ENCODE measurements at regions of chr7 and their contacts with region 1.

Region 1: GRCh38 chr7:54538122-54538521 is 4.1 kb upstream of the VSTM2A start:
- DNase-seq: no peak
- ATAC-seq: no peak
- H3K4me3 ChIP-seq: no peak overlapping the region
- H3K27ac ChIP-seq: no peak overlapping the region
- H3K4me1 ChIP-seq: no peaks in the 10 kb centered on the region
- H3K27me3 ChIP-seq: no peaks in the 10 kb centered on the region
- CTCF ChIP-seq: no peak
- EP300 ChIP-seq: no peak
- POLR2A ChIP-seq: no peak
- RAD21 ChIP-seq: no peak

Region 2: GRCh38 chr7:54477083-54477482 is 61.0 kb before region 1 on chr7:
- CTCF ChIA-PET with region 1: no interaction called
- POLR2A ChIA-PET with region 1: no interaction called
- RAD21 ChIA-PET with region 1: no interaction called
- SMC1A ChIA-PET with region 1: no interaction called
- in situ Hi-C with region 1: no loop called
- intact Hi-C with region 1: loop called (anchors 10 kb)
- DNase-seq: no peak
- ATAC-seq: no peak
- H3K4me3 ChIP-seq: no peak overlapping the region
- H3K27ac ChIP-seq: no peak overlapping the region
- H3K4me1 ChIP-seq: no peaks in the 10 kb centered on the region
- H3K27me3 ChIP-seq: no peaks in the 10 kb centered on the region
- CTCF ChIP-seq: no peak
- EP300 ChIP-seq: no peak
- POLR2A ChIP-seq: no peak
- RAD21 ChIP-seq: no peak

Region 3: DNA sequence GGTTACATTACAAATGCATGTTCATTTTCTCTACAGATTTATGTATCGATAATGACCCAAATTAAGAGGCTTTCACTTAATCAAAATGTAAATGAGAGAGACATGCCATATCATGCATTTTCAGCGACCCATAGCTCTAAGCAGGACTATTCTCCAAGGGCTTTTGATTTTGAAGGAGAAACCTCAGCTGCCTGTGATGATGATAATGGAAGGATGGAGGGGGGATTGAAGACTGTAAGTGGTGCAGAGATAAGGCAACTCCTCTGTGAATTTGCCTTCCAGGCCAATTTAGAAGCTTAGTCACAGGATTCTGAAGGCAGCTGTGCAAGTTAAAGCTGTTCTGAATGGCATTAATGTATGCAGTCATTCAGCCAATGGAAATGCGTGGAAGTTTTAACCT is 12.3 kb after region 1 on chr7:
- CTCF ChIA-PET with region 1: no interaction called
- POLR2A ChIA-PET with region 1: no interaction called
- RAD21 ChIA-PET with region 1: no interaction called
- SMC1A ChIA-PET with region 1: no interaction called
- in situ Hi-C with region 1: no loop called
- intact Hi-C with region 1: no loop called
- DNase-seq: no peak
- ATAC-seq: no peak
- H3K4me3 ChIP-seq: no peak overlapping the region
- H3K27ac ChIP-seq: no peak overlapping the region
- H3K4me1 ChIP-seq: no peaks in the 10 kb centered on the region
- H3K27me3 ChIP-seq: no peaks in the 10 kb centered on the region
- CTCF ChIP-seq: no peak
- EP300 ChIP-seq: no peak
- POLR2A ChIP-seq: no peak
- RAD21 ChIP-seq: no peak

Measured in GM12878 (cell line).